ENCODE measurements at regions of chr10 and their contacts with region 1.

Region 1: GRCh38 chr10:75099952-75100763 is 11.3 kb upstream of the SAMD8 start:
- DNase-seq: peak; percentile 93
- H3K4me3 ChIP-seq: no peak overlapping the region; a peak in 1 of 4 replicates
- H3K27ac ChIP-seq: no peak overlapping the region
- H3K4me1 ChIP-seq: peaks cover 0 to 3% of the 10 kb centered on the region in 2 experiments; a peak in 1 of 4 replicates
- H3K27me3 ChIP-seq: no peaks in the 10 kb centered on the region
- CTCF ChIP-seq: peak; percentile 84
- EP300 ChIP-seq: no peak
- RAD21 ChIP-seq: peak; percentile 94

Region 2: DNA sequence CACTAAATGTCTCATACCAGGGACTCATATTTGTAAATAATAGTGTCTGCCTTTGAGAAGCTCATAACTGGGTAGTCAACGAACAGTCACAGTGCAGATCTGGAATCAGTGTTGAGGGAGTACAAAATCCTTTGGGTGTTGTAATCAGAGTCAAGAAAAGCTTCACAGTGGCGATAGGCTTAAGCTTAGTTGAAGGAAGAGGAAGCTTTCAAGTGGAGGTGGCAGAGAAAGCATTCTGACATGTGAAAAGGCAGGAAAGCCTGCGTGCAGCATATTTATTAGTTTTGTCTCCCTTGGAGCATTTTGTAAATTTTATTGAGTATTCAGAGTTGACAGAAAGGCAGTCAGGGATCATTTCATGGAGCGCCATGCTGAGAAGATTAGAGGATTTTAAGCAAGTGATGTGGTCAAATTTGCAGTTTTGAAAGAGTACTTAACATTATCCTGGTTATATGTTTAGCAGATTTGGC is 844.2 kb before region 1 on chr10:
- CTCF ChIA-PET with region 1: interaction called, 12 read pairs
- POLR2A ChIA-PET with region 1: no interaction called
- DNase-seq: no peak
- H3K4me3 ChIP-seq: no peak overlapping the region
- H3K27ac ChIP-seq: no peak overlapping the region
- H3K4me1 ChIP-seq: peaks cover 0 to 4% of the 10 kb centered on the region in 2 experiments; a peak in 1 of 4 replicates
- H3K27me3 ChIP-seq: no peaks in the 10 kb centered on the region
- CTCF ChIP-seq: no peak
- EP300 ChIP-seq: no peak
- RAD21 ChIP-seq: no peak

Region 3: GRCh38 chr10:74826142-74827044 is 273.8 kb before region 1 on chr10 and contains the start of gene KAT6B:
- CTCF ChIA-PET with region 1: interaction called, 11 read pairs
- POLR2A ChIA-PET with region 1: interaction called, 3 read pairs
- DNase-seq: peak; percentile 94
- H3K4me3 ChIP-seq: peak within 1 kb of the TSS; percentile 86 to 95
- H3K27ac ChIP-seq: peak within 1 kb of the TSS; percentile 94 to 97
- H3K4me1 ChIP-seq: peaks cover 30 to 31% of the 10 kb centered on the region in 2 experiments
- H3K27me3 ChIP-seq: no peaks in the 10 kb centered on the region
- CTCF ChIP-seq: peak; percentile 37; the same call in 1 of the 2 replicates
- EP300 ChIP-seq: peak; percentile 4 to 31; a peak in 3 of 4 replicates
- RAD21 ChIP-seq: peak; percentile 11; the same call in 1 of the 2 replicates
- polyA plus RNA-seq, gene KAT6B: 4.3 and 4.6 TPM in 2 replicates

Region 4: GRCh38 chr10:75111367-75111906 is 11.3 kb after region 1 on chr10 and contains the start of gene SAMD8:
- CTCF ChIA-PET with region 1: interaction called, 17 read pairs
- POLR2A ChIA-PET with region 1: no interaction called
- DNase-seq: peak; percentile 99
- H3K4me3 ChIP-seq: peak within 1 kb of the TSS; percentile 75 to 96
- H3K27ac ChIP-seq: peak within 1 kb of the TSS; percentile 91 to 97
- H3K4me1 ChIP-seq: peaks cover 5 to 8% of the 10 kb centered on the region in 2 experiments; a peak in 3 of 4 replicates
- H3K27me3 ChIP-seq: no peaks in the 10 kb centered on the region
- CTCF ChIP-seq: no peak; the same call in none of the 2 replicates
- EP300 ChIP-seq: no peak
- RAD21 ChIP-seq: no peak
- polyA plus RNA-seq, gene SAMD8: 9.7 and 14.3 TPM in 2 replicates

Region 5: GRCh38 chr10:75136346-75136745 is 36.2 kb after region 1 on chr10:
- CTCF ChIA-PET with region 1: no interaction called
- POLR2A ChIA-PET with region 1: no interaction called
- DNase-seq: no peak
- H3K4me3 ChIP-seq: no peak overlapping the region
- H3K27ac ChIP-seq: no peak overlapping the region
- H3K4me1 ChIP-seq: peaks cover 3 to 13% of the 10 kb centered on the region in 2 experiments; a peak in 3 of 4 replicates
- H3K27me3 ChIP-seq: no peaks in the 10 kb centered on the region
- CTCF ChIP-seq: no peak
- EP300 ChIP-seq: no peak
- RAD21 ChIP-seq: no peak